IMR-90 (cell line): ENCODE measurements at regions of chr16 and their contacts with region 1.

Region 1: GRCh38 chr16:50301626-50302471 is 35.5 kb downstream of the ADCY7 start:
- DNase-seq: peak; percentile 86
- ATAC-seq: peak; percentile 81
- H3K4me3 ChIP-seq: no peak overlapping the region
- H3K27ac ChIP-seq: peak overlapping the region; percentile 83
- H3K4me1 ChIP-seq: peaks cover 43% of the 10 kb centered on the region
- H3K27me3 ChIP-seq: no peaks in the 10 kb centered on the region
- CTCF ChIP-seq: no peak
- POLR2A ChIP-seq: peak; percentile 40; the same call in 1 of the 2 replicates
- RAD21 ChIP-seq: no peak

Region 2: DNA sequence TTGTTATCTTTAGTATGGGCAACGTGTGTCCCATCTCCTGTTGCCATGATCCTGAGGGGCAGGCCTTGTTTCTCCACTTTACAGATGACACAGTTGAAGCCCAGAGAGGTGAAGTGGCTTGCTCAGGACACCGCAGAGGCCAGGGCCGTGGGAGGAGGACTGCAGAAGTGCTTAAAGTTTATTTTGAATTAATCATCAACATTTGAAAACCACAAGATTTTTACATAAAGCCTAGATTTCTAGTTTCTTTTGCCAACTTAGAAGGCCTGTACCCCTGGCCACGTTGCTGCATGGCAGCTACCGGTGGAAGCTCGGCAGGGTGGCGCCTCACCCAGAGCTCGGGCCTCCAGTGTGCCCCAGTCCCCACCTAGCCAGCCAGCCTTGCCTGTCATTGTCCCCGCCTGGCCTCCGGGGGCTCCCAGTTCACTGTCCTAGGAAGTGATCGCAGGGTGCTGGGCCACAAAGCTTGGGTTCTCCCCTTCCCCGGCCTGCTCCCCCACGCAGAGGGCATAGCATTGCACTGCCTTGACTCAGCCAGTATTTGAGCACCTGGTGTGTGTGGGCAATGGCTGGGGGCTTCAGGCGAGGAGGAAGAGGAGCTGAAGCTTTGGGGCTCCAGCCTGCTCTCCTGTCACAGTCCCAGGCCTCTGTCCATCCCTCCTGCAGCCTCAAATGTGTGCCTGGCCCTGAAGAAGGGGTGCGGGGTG is 50.3 kb before region 1 on chr16:
- CTCF ChIA-PET with region 1: no interaction called
- POLR2A ChIA-PET with region 1: no interaction called
- dilution Hi-C with region 1: no loop called
- in situ Hi-C with region 1: no loop called
- intact Hi-C with region 1: loop called (anchors 2 kb)
- DNase-seq: peak; percentile 91
- ATAC-seq: peak; percentile 93
- H3K4me3 ChIP-seq: no peak overlapping the region
- H3K27ac ChIP-seq: no peak overlapping the region
- H3K4me1 ChIP-seq: peaks cover 7% of the 10 kb centered on the region
- H3K27me3 ChIP-seq: peaks cover 34% of the 10 kb centered on the region
- CTCF ChIP-seq: no peak
- POLR2A ChIP-seq: no peak
- RAD21 ChIP-seq: 0 out of 2 replicates have a peak, but pooled peaks have one; percentile 1

Region 3: GRCh38 chr16:50266337-50267091 is 35.3 kb before region 1 on chr16 and contains the start of gene ADCY7:
- CTCF ChIA-PET with region 1: no interaction called
- POLR2A ChIA-PET with region 1: no interaction called
- dilution Hi-C with region 1: no loop called
- in situ Hi-C with region 1: no loop called
- intact Hi-C with region 1: loop called (anchors 5 kb)
- DNase-seq: peak; percentile 78
- ATAC-seq: peak; percentile 96
- H3K4me3 ChIP-seq: peak within 1 kb of the TSS; percentile 41
- H3K27ac ChIP-seq: peak within 1 kb of the TSS; percentile 75
- H3K4me1 ChIP-seq: peaks cover 19% of the 10 kb centered on the region
- H3K27me3 ChIP-seq: peaks cover 4% of the 10 kb centered on the region; the same call in 1 of the 2 replicates
- CTCF ChIP-seq: no peak
- POLR2A ChIP-seq: no peak
- RAD21 ChIP-seq: no peak
- total RNA-seq, gene ADCY7: 12.2 and 15.2 TPM in 2 replicates

Region 4: DNA sequence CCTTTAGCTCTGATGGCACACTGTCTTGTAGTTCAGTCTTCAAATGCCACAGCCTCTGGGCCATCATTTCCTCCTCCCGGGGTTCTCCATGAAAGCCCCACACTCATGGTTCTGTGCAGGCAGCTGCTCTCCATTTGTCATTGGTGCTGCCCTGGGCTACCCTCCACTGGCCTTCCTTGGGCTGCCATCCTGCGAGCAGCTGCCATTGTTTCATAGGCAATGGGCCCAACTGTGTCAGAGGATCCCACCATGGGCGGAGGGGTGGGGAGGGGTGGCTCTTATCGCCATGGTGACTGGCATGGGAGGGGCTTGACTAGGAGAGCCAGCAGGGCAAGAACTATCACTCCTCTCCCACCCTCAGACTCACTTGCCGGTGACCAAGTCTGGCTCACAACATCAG is 105.5 kb after region 1 on chr16:
- CTCF ChIA-PET with region 1: no interaction called
- POLR2A ChIA-PET with region 1: no interaction called
- dilution Hi-C with region 1: no loop called
- in situ Hi-C with region 1: no loop called
- intact Hi-C with region 1: no loop called
- DNase-seq: no peak
- ATAC-seq: no peak
- H3K4me3 ChIP-seq: no peak overlapping the region
- H3K27ac ChIP-seq: no peak overlapping the region
- H3K4me1 ChIP-seq: no peaks in the 10 kb centered on the region
- H3K27me3 ChIP-seq: no peaks in the 10 kb centered on the region; the same call in 1 of the 2 replicates
- CTCF ChIP-seq: no peak
- POLR2A ChIP-seq: no peak
- RAD21 ChIP-seq: no peak

Region 5: DNA sequence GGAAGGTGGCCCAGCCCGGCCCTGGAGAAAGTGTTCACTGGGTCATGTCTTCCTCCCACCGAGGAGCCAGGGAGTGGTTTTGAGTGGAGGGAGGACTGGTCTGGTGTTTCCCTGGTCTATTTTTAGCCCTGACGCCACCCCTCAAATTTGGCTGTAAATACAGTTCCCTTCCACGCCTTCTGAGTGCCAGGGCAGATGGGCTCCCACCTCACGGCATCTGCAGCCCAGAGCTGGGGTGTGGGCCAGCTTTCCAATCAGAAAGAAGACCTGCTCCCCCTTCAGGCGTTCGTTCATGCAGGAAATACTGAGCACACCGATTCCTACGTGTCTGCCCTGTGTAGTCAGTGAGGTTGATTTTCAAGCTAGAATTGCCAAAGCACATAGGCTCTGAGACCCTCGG is 325.6 kb after region 1 on chr16:
- CTCF ChIA-PET with region 1: no interaction called
- POLR2A ChIA-PET with region 1: no interaction called
- dilution Hi-C with region 1: no loop called
- in situ Hi-C with region 1: no loop called
- intact Hi-C with region 1: no loop called
- DNase-seq: no peak
- ATAC-seq: no peak
- H3K4me3 ChIP-seq: no peak overlapping the region
- H3K27ac ChIP-seq: no peak overlapping the region
- H3K4me1 ChIP-seq: no peaks in the 10 kb centered on the region
- H3K27me3 ChIP-seq: peaks cover 2% of the 10 kb centered on the region; the same call in 1 of the 2 replicates
- CTCF ChIP-seq: no peak
- POLR2A ChIP-seq: no peak
- RAD21 ChIP-seq: no peak